Heart right ventricle (tissue), 16 donors: ENCODE measurements at regions of chr7 and their contacts with region 1.

Region 1: GRCh38 chr7:129755555-129755954 is 144.0 kb downstream of the NRF1 start:
- DNase-seq: no peak
- ATAC-seq: no peak
- H3K4me3 ChIP-seq: no peak overlapping the region
- H3K27ac ChIP-seq: no peak overlapping the region
- H3K4me1 ChIP-seq: no peaks in the 10 kb centered on the region
- H3K27me3 ChIP-seq: no peaks in the 10 kb centered on the region
- CTCF ChIP-seq: no peak

Region 2: GRCh38 chr7:130047821-130048220 is 292.3 kb after region 1 on chr7:
- intact Hi-C with region 1: loop called in 1 of 10 experiments (anchors 5 kb)
- DNase-seq: no peak
- ATAC-seq: no peak
- H3K4me3 ChIP-seq: no peak overlapping the region
- H3K27ac ChIP-seq: no peak overlapping the region
- H3K4me1 ChIP-seq: peaks cover 0 to 21% (median 16%) of the 10 kb centered on the region in 9 donors
- H3K27me3 ChIP-seq: no peaks in the 10 kb centered on the region
- CTCF ChIP-seq: no peak